Left ventricle myocardium inferior (tissue), 1 donor: ENCODE measurements at regions of chr14 and their contacts with region 1.

Region 1: DNA sequence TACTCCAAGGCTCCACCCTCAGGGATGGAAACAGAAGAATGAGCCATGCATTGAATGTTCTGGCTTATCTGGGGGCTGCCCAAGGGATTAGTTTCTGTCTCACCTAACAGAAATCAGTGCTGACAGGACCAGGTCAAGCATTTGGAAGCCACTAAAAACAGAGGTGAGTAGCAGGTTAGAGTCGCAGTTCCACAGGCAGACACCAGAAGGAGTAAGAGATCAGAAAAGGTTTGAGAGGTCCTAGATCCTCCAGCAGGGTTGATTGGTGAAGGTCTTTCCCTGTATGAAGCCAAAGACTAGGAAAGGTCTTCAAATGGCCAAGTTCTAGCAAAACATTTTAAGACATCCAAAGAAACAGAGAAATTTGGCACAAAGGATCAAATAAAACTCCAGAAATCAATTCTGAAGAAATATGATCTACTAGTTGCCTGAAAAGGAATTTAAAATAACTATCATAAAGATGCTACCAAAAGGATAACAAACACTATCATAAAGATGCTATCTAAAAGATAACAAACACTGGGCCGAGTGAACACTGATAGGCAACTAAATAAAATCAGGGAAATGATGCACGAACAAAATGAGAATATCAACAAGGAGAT is 19.5 kb upstream of the TTC9 start:
- DNase-seq: no peak
- H3K4me3 ChIP-seq: no peak overlapping the region
- H3K27ac ChIP-seq: no peak overlapping the region
- H3K4me1 ChIP-seq: no peaks in the 10 kb centered on the region
- H3K27me3 ChIP-seq: no peaks in the 10 kb centered on the region
- CTCF ChIP-seq: peak; percentile 79

Region 2: GRCh38 chr14:70714055-70714621 is 91.9 kb after region 1 on chr14:
- intact Hi-C with region 1: loop called (anchors 5 kb)
- DNase-seq: no peak
- H3K4me3 ChIP-seq: no peak overlapping the region
- H3K27ac ChIP-seq: peak overlapping the region; percentile 37
- H3K4me1 ChIP-seq: peaks cover 19% of the 10 kb centered on the region
- H3K27me3 ChIP-seq: peaks cover 23% of the 10 kb centered on the region
- CTCF ChIP-seq: peak; percentile 79